Dendritic cell treated with granulocyte-macrophage colony-stimulating factor and Interleukin-4, amounts not matched to agents 40 ng/mL and 50 ng/mL, for 4 days (primary cell): ENCODE measurements at regions of chr12 and their contacts with region 1.

Region 1: DNA sequence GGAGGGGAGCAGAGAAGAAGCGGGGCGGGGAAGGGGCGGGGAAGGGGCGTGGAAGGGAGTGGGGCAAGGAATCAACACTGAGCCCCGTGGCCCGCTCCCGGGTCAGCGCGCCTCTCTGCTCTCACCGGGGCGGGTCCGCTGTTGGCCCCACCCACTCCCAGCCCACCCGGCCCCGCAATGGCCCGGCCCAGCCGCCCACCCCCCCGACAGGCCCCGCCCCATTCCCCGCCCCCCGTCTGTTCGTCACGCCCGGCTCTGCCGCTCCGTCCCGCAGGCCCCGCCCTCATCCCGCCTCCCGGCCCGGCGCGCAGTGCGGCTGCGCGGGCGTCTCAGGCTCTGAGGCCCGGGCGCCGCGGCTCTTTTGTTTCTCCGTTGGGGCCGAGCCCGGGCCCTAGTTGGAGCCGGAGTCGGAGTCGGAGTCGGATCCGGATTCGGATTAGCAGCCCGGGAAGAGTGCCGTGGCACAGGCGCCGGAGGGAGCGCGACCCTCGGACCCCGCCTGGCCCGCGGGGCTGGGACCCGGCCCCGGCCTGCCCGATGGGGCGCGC is at the start of gene ULK1:
- H3K4me3 Mint-ChIP-seq: peak within 1 kb of the TSS; percentile 83
- H3K27ac Mint-ChIP-seq: peak within 1 kb of the TSS; percentile 87
- H3K4me1 Mint-ChIP-seq: peaks cover 27% of the 10 kb centered on the region
- H3K27me3 Mint-ChIP-seq: peaks cover 6% of the 10 kb centered on the region

Region 2: GRCh38 chr12:131860562-131861291 is 33.7 kb before region 1 on chr12:
- intact Hi-C with region 1: loop called (anchors 5 kb)
- H3K4me3 Mint-ChIP-seq: peak overlapping the region; percentile 33
- H3K27ac Mint-ChIP-seq: peak overlapping the region; percentile 53
- H3K4me1 Mint-ChIP-seq: peaks cover 35% of the 10 kb centered on the region
- H3K27me3 Mint-ChIP-seq: peaks cover 14% of the 10 kb centered on the region

Region 3: GRCh38 chr12:131882779-131883520 is 11.4 kb before region 1 on chr12:
- intact Hi-C with region 1: loop called (anchors 2 kb)
- H3K4me3 Mint-ChIP-seq: peak overlapping the region; percentile 68
- H3K27ac Mint-ChIP-seq: peak overlapping the region; percentile 87
- H3K4me1 Mint-ChIP-seq: peaks cover 73% of the 10 kb centered on the region
- H3K27me3 Mint-ChIP-seq: no peaks in the 10 kb centered on the region

Region 4: DNA sequence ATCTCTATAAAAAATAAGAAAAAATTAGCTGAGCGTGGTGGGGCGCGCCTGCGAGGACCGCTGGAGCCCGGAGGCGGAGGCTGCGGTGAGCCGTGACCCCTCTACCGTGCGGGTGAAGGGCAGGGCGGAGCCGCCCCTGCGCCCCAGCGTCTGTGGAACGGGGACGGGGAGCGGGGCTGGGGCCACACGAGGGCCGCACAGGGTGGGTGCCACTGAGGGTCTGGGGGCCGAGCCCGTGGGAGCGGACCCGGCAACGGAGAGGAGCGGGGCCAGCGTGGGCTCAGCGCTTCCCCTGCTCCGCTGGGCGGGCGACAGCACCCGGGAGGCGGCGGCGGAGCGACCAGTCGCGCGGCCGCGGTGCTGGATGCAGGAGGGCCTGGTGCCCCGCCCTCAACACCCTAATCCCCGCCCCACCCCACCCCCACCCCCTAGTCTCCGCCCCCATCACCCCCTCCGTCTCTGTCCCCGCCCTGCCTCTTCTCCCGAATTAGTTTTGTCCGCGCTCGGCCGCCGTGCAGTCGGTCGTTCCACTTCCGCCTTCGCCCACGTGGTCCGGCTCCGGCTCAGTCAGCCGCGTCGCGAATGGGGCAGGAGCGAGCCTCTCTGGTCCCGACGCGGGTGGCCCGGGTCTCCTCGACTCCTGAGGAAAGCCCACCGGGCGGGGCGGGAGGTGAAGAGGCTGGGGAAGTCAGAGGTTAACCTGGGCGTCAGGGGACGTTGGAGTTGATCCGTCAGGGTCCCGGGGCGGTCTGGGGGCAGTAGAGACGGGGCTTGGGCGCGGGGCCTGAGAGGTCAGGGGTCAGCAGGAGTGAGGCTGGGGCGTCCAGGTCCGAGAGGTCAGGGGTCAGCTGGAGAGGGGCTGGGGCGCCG is 34.6 kb after region 1 on chr12 and contains the start of gene PUS1:
- intact Hi-C with region 1: loop called (anchors 2 kb)
- H3K4me3 Mint-ChIP-seq: peak within 1 kb of the TSS; percentile 98
- H3K27ac Mint-ChIP-seq: peak within 1 kb of the TSS; percentile 94
- H3K4me1 Mint-ChIP-seq: peaks cover 18% of the 10 kb centered on the region
- H3K27me3 Mint-ChIP-seq: peaks cover 9% of the 10 kb centered on the region

Region 5: DNA sequence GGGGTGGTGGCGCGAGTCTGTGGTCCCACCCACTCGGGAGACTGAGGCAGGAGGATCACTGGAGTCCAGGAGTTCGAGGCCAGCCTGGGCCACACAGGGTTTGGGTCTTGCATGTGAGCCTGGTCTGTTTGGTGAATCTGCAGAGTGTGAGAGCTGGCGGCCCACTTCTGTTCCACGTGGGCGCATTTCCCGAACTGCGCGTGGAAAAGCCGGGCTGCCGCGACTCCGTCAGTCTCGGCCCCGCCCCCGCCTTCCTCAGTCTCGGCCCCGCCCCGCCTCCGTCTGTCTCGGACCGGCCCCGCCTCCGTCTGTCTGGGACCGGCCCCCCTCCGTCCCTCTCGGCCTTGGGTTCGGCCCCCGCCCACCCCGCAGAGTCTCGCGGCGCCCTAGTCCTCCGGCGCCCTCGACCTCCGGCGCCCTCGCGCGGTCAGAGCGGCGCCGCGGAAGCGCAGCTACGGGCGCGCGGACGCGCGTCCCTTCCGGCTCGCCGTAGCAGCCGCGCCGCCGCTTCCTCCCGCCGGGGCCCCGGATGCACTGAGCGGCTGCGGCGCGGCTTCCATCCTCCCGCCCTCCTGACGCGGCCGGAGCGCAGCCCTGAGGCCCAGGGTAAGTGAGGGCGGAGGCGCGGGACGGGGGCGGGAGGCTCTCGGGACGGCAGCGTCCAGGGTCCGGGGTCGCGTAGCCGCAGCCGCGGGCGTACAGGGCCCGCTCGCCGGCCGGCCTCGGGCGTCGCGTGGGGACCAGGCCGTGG is 55.2 kb after region 1 on chr12 and contains the start of gene EP400:
- intact Hi-C with region 1: loop called (anchors 5 kb)
- H3K4me3 Mint-ChIP-seq: peak within 1 kb of the TSS; percentile 90
- H3K27ac Mint-ChIP-seq: peak within 1 kb of the TSS; percentile 81
- H3K4me1 Mint-ChIP-seq: peaks cover 36% of the 10 kb centered on the region
- H3K27me3 Mint-ChIP-seq: no peaks in the 10 kb centered on the region

Region 6: DNA sequence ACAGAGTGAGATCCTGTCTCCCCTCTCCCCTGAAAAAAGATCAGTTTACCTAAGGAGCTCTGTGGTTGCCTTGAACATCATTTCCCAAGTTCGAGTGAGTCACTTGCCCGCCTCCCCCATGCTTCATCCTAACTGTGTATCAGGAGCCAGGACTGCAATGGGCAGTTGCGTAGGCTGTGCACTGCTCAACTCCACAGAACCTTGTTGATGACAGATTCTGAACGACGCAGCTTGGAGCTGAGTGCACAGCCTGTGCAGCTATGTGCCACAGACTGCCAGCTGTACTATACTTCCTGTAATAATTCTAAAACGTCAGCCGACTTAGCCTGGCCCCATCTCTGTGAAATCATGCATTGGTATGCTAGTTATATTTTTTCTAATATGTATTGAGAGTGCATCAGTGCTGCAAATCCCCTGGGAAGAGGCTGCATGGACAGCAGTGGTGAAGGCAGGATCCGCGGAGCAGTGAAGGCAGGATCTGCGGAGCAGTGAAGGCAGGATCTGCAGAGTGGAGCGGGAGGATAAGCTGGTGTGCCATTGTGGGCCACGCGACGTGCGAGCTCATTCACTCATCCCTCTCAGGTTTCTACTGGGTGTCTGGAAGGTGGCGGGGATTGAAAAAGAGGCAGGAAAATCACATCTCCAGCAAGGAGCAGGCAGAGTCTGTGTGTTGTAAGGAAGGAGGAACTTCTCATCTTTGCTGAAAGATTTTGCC is 354.2 kb after region 1 on chr12:
- intact Hi-C with region 1: no loop called
- H3K4me3 Mint-ChIP-seq: no peak overlapping the region
- H3K27ac Mint-ChIP-seq: no peak overlapping the region
- H3K4me1 Mint-ChIP-seq: no peaks in the 10 kb centered on the region
- H3K27me3 Mint-ChIP-seq: peaks cover 10% of the 10 kb centered on the region